Thyroid gland (tissue), 4 donors: ENCODE measurements at regions of chr6 and their contacts with region 1.

Region 1: DNA sequence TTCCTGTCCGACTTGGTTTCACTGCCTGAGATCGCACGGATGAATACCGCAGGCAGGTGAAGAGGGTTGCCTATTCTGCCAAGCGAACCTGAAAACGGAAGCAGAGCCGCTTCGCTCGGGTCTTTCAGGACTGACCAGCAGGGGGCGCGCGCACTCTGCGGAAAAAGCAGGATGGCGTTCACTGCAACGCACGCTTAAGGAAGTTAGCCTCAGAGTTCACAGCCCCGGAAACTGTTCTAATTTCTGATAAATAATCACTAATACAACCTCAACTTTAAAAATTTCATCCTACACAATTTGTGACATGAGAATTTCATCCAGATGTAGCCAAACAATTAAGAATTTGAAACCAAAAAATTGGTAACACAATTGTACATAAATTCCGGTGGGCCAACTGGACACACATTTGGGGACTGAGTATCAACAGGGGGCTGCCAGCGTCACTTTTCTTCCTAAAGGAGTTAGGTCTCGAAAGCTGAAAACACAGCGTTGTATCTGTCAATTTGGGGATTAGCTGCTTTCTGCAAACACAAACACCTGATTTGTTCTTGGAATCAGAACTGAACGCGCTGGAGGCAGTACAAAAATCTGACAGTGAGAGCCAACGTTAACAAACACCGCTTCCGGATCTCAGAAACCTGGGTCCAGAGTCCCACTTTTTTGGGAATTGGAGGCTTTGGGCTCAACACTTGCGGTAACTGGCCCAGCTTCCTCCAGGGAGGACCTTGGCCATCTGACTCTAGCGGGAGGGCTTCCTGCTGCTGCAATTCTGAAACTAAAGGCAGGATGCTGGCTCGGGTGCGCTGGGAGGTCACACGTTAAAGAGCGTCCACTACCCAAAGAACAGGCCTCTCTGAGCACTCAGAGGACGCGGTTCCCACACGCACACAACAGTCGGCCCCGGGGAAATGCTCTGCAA is 8.8 kb downstream of the PXDC1 start:
- DNase-seq: peak; percentile 86 to 92
- H3K4me3 ChIP-seq: no peak overlapping the region
- H3K27ac ChIP-seq: peak overlapping the region; percentile 60 to 100 (median 70)
- H3K4me1 ChIP-seq: peaks cover 44 to 65% of the 10 kb centered on the region in 2 donors
- H3K27me3 ChIP-seq: no peaks in the 10 kb centered on the region
- CTCF ChIP-seq: peak; percentile 82 to 97 (median 95)
- POLR2A ChIP-seq: no peak

Region 2: GRCh38 chr6:3929281-3929798 is 186.7 kb after region 1 on chr6:
- intact Hi-C with region 1: loop called (anchors 2 kb)
- DNase-seq: no peak
- H3K4me3 ChIP-seq: no peak overlapping the region
- H3K27ac ChIP-seq: no peak overlapping the region
- H3K4me1 ChIP-seq: peaks cover 0 to 21% of the 10 kb centered on the region in 2 donors
- H3K27me3 ChIP-seq: no peaks in the 10 kb centered on the region
- CTCF ChIP-seq: no peak
- POLR2A ChIP-seq: no peak

Region 3: DNA sequence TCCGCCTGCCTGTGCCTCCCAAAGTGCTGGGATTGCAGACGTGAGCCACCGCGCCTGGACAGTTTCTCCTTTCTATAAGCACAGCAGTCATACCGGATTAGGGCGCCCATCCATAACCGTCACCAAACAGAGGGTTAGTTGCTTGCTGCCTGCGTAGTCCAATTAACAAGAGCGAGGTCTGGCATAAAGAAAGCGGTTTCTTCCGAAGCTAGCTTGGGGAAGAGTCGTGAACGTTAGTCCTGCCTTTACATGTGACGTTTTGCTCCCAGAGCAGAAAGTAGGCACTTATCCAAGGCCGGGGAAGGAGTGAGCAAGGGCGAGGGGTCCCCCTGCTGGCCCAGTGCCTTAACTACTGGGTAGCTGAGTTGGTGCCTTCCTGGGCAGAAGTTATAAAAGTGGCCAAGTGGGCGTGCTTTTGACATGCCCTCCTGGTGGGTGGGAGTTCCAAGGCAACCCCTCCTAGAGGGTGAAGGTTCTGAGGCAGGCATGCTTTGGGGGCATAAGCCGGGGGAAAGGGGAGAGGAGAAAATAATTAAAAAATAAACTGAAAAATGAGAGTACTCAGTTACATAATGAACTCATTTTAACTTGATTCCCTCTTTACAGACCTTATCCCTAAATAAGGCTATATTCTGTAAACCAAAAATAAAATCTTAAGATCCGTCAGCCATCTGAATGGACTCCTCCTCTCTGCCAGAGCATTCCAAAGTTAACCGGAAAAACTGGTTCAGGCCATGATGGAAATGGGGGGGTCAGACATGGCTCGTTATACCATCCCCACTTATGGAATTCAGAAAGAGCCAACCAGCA is 248.2 kb after region 1 on chr6:
- intact Hi-C with region 1: loop called (anchors 10 kb)
- DNase-seq: peak; percentile 92 to 93
- H3K4me3 ChIP-seq: peak overlapping the region in 2 of 3 donors; percentile 31 to 34
- H3K27ac ChIP-seq: peak overlapping the region; percentile 84 to 91 (median 90)
- H3K4me1 ChIP-seq: peaks cover 15 to 33% of the 10 kb centered on the region in 2 donors
- H3K27me3 ChIP-seq: no peaks in the 10 kb centered on the region
- CTCF ChIP-seq: peak; percentile 58 to 95 (median 90)
- POLR2A ChIP-seq: peak in 1 of 2 donors; percentile 47

Region 4: GRCh38 chr6:4155848-4156466 is 413.3 kb after region 1 on chr6:
- intact Hi-C with region 1: loop called (anchors 10 kb)
- DNase-seq: peak; percentile 72 to 78
- H3K4me3 ChIP-seq: no peak overlapping the region
- H3K27ac ChIP-seq: no peak overlapping the region
- H3K4me1 ChIP-seq: no peaks in the 10 kb centered on the region
- H3K27me3 ChIP-seq: no peaks in the 10 kb centered on the region
- CTCF ChIP-seq: peak; percentile 67 to 87 (median 74)
- POLR2A ChIP-seq: no peak